GM10248 (cell line): ENCODE measurements at regions of chr13 and their contacts with region 1.

Region 1: GRCh38 chr13:95834134-95834765 is 157.3 kb downstream of the DNAJC3 start:
- DNase-seq: peak; percentile 60
- CTCF ChIP-seq: peak; percentile 85

Region 2: GRCh38 chr13:95536632-95537241 is 297.5 kb before region 1 on chr13:
- CTCF ChIA-PET with region 1: interaction called, 62 read pairs
- POLR2A ChIA-PET with region 1: no interaction called
- DNase-seq: no peak
- CTCF ChIP-seq: peak; percentile 32

Region 3: GRCh38 chr13:95813139-95813538 is 21.1 kb before region 1 on chr13:
- CTCF ChIA-PET with region 1: interaction called, 24 read pairs
- POLR2A ChIA-PET with region 1: no interaction called
- DNase-seq: no peak
- CTCF ChIP-seq: no peak

Region 4: GRCh38 chr13:95822303-95822702 is 11.9 kb before region 1 on chr13:
- CTCF ChIA-PET with region 1: interaction called, 64 read pairs
- POLR2A ChIA-PET with region 1: no interaction called
- DNase-seq: no peak
- CTCF ChIP-seq: no peak

Region 5: DNA sequence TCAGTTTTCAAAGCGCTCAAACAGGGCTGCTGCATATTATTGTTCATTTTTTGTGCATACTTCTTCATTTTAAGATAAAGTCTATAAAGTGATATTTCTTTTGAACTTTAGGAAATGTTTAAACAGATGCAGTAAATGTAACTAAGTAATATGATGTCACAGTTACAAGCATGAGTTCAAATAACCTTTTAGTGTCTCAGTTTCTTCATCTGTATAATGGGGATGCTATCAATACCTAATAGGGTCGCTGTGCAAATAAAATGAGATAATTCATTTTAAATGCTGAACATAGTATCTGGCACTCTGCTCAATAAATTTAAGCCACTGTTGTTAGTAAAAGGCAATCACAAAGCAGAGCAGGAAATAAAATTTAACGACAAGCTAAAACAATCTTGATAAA is 121.5 kb after region 1 on chr13:
- CTCF ChIA-PET with region 1: no interaction called
- POLR2A ChIA-PET with region 1: no interaction called
- DNase-seq: no peak
- CTCF ChIP-seq: no peak